ENCODE measurements at regions of chr2 and their contacts with region 1.

Region 1: DNA sequence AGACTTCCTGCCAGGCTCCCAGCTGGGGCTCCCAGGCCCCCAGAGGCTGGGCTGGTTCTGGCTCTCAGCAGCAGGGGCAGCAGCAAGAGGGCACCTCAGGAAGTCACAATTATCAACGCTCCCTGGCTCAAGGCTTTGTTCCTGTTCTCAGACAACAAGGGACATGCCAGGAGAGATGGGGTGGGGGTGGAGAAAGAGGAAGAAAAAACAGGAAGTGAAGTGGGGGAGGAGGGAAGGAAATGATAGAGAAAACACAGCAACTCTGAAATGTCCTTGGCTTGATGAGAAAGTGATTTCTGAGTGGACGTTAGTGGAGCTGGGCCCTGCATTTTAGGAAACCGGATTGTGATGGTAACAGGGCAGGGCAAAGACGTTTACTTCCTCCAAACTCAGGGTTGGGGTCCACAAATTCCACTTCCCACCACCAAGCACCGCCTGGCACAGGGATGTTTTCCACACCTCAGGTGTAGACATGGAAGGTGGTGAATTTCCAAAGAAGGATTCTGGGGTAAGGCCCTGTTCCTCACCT is 40.4 kb downstream of the CYRIA start:
- DNase-seq: no peak
- ATAC-seq: no peak
- H3K4me3 ChIP-seq: no peak overlapping the region
- H3K27ac ChIP-seq: no peak overlapping the region
- H3K4me1 ChIP-seq: peaks cover 46% of the 10 kb centered on the region
- H3K27me3 ChIP-seq: no peaks in the 10 kb centered on the region
- CTCF ChIP-seq: no peak
- POLR2A ChIP-seq: no peak
- RAD21 ChIP-seq: no peak

Region 2: GRCh38 chr2:15730545-15731212 is 894.6 kb before region 1 on chr2:
- CTCF ChIA-PET with region 1: no interaction called
- POLR2A ChIA-PET with region 1: no interaction called
- dilution Hi-C with region 1: no loop called
- in situ Hi-C with region 1: no loop called
- intact Hi-C with region 1: loop called (anchors 10 kb)
- DNase-seq: peak; percentile 92
- ATAC-seq: peak; percentile 78
- H3K4me3 ChIP-seq: no peak overlapping the region
- H3K27ac ChIP-seq: no peak overlapping the region
- H3K4me1 ChIP-seq: peaks cover 2% of the 10 kb centered on the region; the same call in 1 of the 2 replicates
- H3K27me3 ChIP-seq: peaks cover 18% of the 10 kb centered on the region
- CTCF ChIP-seq: no peak
- POLR2A ChIP-seq: no peak
- RAD21 ChIP-seq: no peak

Region 3: GRCh38 chr2:16650287-16651249 is 25.3 kb after region 1 on chr2:
- CTCF ChIA-PET with region 1: no interaction called
- POLR2A ChIA-PET with region 1: no interaction called
- dilution Hi-C with region 1: no loop called
- in situ Hi-C with region 1: no loop called
- intact Hi-C with region 1: loop called (anchors 2 kb)
- DNase-seq: peak; percentile 78
- ATAC-seq: peak; percentile 67
- H3K4me3 ChIP-seq: peak overlapping the region; percentile 38
- H3K27ac ChIP-seq: peak overlapping the region; percentile 89
- H3K4me1 ChIP-seq: peaks cover 30% of the 10 kb centered on the region
- H3K27me3 ChIP-seq: no peaks in the 10 kb centered on the region
- CTCF ChIP-seq: no peak
- POLR2A ChIP-seq: no peak
- RAD21 ChIP-seq: no peak